OCI-LY7 (cell line): ENCODE measurements at regions of chrX and their contacts with region 1.

Region 1: GRCh38 chrX:11758400-11759171 is 549 bp downstream of the MSL3 start:
- DNase-seq: peak; percentile 85
- H3K4me3 ChIP-seq: peak overlapping the region; percentile 95
- H3K27ac ChIP-seq: peak overlapping the region; percentile 99
- H3K4me1 ChIP-seq: peaks cover 20% of the 10 kb centered on the region
- CTCF ChIP-seq: peak; percentile 68

Region 2: DNA sequence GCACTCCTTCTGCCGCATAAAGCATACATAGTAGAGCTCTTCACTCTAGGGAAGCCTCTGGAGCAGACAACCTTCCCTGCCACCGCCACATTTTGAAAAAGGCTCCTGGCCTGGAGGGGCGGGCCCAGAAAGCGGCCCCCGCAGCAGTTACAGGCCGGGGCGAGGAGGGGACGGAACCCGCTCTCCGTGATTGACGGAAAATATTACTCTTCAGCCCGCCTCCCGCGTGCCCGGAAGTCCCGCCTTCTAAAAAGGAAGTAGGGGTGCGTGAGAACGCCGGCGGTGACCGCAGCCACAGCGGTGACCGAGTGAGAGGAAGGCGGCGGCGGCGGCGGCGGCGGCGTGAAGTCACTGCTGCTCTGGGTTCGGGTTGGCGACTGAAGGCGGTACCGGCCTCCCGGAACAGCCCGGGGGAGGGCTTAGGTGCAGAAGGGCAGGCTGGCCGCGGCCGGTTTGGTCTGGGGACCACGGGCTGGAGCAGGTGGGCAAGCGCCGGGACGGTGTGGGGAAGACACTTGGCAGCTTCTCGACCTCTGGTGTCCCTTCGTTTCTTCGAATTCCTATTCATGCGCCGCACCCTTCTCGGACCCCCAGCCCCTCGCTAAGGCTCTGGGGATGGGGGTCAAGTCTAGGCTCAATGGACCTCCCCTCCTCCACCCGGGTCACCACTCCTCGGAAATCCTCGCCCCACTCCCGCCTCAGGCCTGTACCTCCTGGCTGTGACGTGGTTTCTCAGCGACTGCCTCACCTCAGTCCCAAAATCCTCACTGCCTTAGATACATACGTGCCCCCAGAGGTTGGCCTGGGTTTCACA is 647.3 kb before region 1 on chrX and contains the start of gene HCCS:
- CTCF ChIA-PET with region 1: no interaction called
- POLR2A ChIA-PET with region 1: no interaction called
- intact Hi-C with region 1: loop called (anchors 1 kb)
- DNase-seq: peak; percentile 85
- H3K4me3 ChIP-seq: peak within 1 kb of the TSS; percentile 95
- H3K27ac ChIP-seq: peak within 1 kb of the TSS; percentile 62
- H3K4me1 ChIP-seq: peaks cover 26% of the 10 kb centered on the region
- CTCF ChIP-seq: peak; percentile 39; the same call in 1 of the 2 replicates
- total RNA-seq, gene HCCS: 11.1 and 16.1 TPM in 2 replicates